Activated naive CD4-positive, alpha-beta T cell treated with anti-CD3 and anti-CD28 coated beads for 36 hours (primary cell): ENCODE measurements at regions of chr12 and their contacts with region 1.

Region 1: DNA sequence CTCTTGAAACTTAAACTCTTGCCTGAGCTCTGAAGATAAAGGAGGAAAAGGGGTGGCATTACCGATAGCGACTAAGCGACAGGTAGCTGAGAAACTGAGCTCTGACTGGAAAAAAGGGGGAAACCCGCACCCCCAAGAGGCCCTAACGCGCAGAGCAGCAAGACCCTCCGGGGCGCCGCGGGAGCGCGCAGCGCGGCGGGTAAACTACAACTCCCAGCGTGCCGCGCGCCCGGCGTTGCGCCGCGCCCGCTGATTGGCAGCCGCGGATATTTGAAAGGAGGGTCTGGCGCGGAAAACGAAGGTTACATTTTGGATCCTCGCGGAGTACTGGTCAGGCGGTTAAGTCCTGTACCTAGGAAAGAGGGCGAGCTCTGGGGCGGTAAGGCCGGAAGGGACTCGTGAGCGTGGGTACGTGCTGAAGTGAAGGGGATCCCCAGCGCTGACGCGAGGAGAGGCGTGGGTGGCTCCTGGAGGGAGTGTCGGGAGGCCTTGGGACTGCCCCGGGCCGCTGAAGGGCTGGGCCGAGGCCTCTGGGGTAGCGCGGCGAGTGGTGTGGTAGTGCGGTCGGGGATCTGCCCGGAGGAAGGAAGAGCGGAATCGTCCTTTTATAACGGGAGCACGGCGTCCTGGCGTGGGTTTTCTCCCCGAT is at the start of gene ESPL1:
- DNase-seq: peak; percentile 95
- H3K4me3 Mint-ChIP-seq: peak within 1 kb of the TSS; percentile 99
- H3K27ac Mint-ChIP-seq: peak within 1 kb of the TSS; percentile 99
- H3K4me1 Mint-ChIP-seq: peaks cover 22% of the 10 kb centered on the region
- H3K27me3 Mint-ChIP-seq: no peaks in the 10 kb centered on the region
- total RNA-seq, gene ESPL1: 53.3 to 54.2 TPM

Region 2: GRCh38 chr12:53145383-53146260 is 122.5 kb before region 1 on chr12:
- CTCF ChIA-PET with region 1: no interaction called
- intact Hi-C with region 1: no loop called
- DNase-seq: no peak
- H3K4me3 Mint-ChIP-seq: no peak overlapping the region
- H3K27ac Mint-ChIP-seq: no peak overlapping the region
- H3K4me1 Mint-ChIP-seq: no peaks in the 10 kb centered on the region
- H3K27me3 Mint-ChIP-seq: no peaks in the 10 kb centered on the region

Region 3: GRCh38 chr12:53200458-53201176 is 67.5 kb before region 1 on chr12:
- CTCF ChIA-PET with region 1: interaction called, 13 read pairs
- intact Hi-C with region 1: no loop called
- DNase-seq: peak; percentile 71
- H3K4me3 Mint-ChIP-seq: peak overlapping the region; percentile 45
- H3K27ac Mint-ChIP-seq: peak overlapping the region; percentile 90
- H3K4me1 Mint-ChIP-seq: peaks cover 74% of the 10 kb centered on the region
- H3K27me3 Mint-ChIP-seq: no peaks in the 10 kb centered on the region

Region 4: GRCh38 chr12:53213348-53213747 is 54.8 kb before region 1 on chr12:
- CTCF ChIA-PET with region 1: interaction called, 141 read pairs
- intact Hi-C with region 1: loop called (anchors 1 kb)
- DNase-seq: peak; percentile 89
- H3K4me3 Mint-ChIP-seq: no peak overlapping the region
- H3K27ac Mint-ChIP-seq: peak overlapping the region; percentile 33
- H3K4me1 Mint-ChIP-seq: peaks cover 42% of the 10 kb centered on the region
- H3K27me3 Mint-ChIP-seq: no peaks in the 10 kb centered on the region

Region 5: GRCh38 chr12:53251477-53252348 is 16.4 kb before region 1 on chr12:
- CTCF ChIA-PET with region 1: interaction called, 36 read pairs
- intact Hi-C with region 1: loop called (anchors 1 kb)
- DNase-seq: peak; percentile 85
- H3K4me3 Mint-ChIP-seq: peak overlapping the region; percentile 97
- H3K27ac Mint-ChIP-seq: peak overlapping the region; percentile 87
- H3K4me1 Mint-ChIP-seq: peaks cover 40% of the 10 kb centered on the region
- H3K27me3 Mint-ChIP-seq: no peaks in the 10 kb centered on the region

Region 6: GRCh38 chr12:53287741-53288216 is 19.7 kb after region 1 on chr12:
- CTCF ChIA-PET with region 1: interaction called, 66 read pairs
- intact Hi-C with region 1: loop called (anchors 2 kb)
- DNase-seq: peak; percentile 77
- H3K4me3 Mint-ChIP-seq: no peak overlapping the region
- H3K27ac Mint-ChIP-seq: peak overlapping the region; percentile 32
- H3K4me1 Mint-ChIP-seq: peaks cover 23% of the 10 kb centered on the region
- H3K27me3 Mint-ChIP-seq: no peaks in the 10 kb centered on the region

Region 7: DNA sequence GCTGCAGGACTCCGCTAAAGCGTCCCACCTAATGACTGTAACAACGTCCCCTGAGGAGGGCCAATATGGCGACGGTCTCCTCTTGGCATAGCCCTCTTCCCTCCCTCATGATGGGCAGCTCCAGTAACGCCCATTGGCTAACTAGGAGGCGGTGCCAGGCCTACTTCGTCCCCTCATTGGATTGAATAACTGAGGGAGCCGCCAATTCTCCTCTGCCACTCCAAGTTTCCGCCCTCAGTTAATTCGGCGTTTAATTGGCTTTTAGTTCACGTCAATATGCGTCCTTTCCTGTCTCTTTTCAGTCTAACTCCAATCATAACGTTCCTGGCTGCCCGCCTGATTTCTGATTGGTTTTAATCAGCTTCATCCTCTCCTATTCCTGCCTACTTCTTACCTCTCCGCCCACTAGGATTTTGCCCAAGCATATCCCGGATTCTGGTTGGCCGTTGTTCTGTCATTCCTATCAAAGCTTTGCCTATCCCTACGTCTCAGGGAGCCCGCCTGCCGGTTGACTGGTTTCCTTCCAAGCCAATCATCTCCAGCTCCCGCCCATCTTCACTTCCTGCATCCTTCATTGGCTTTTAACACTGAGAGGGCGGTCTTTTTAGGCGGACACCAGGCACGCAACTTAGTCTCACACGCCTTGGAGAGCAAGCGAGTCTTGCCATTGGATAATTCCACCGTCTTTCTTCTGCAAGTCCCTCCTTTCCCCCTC is 111.4 kb after region 1 on chr12:
- CTCF ChIA-PET with region 1: no interaction called
- intact Hi-C with region 1: loop called (anchors 1 kb)
- DNase-seq: peak; percentile 99
- H3K4me3 Mint-ChIP-seq: no peak overlapping the region
- H3K27ac Mint-ChIP-seq: no peak overlapping the region
- H3K4me1 Mint-ChIP-seq: peaks cover 48% of the 10 kb centered on the region
- H3K27me3 Mint-ChIP-seq: no peaks in the 10 kb centered on the region

Region 8: GRCh38 chr12:53500776-53501614 is 232.9 kb after region 1 on chr12 and contains the start of gene TARBP2:
- CTCF ChIA-PET with region 1: no interaction called
- intact Hi-C with region 1: loop called (anchors 1 kb)
- DNase-seq: peak; percentile 97
- H3K4me3 Mint-ChIP-seq: peak within 1 kb of the TSS; percentile 81
- H3K27ac Mint-ChIP-seq: peak within 1 kb of the TSS; percentile 96
- H3K4me1 Mint-ChIP-seq: peaks cover 41% of the 10 kb centered on the region
- H3K27me3 Mint-ChIP-seq: no peaks in the 10 kb centered on the region
- total RNA-seq, gene TARBP2: 25.0 to 26.8 TPM